Activated CD8-positive, alpha-beta memory T cell treated with anti-CD3 and anti-CD28 coated beads, Interleukin-2, amount 10 ng/mL, durations not matched to agents 7 days and 5 days (primary cell): ENCODE measurements at regions of chr15 and their contacts with region 1.

Region 1: GRCh38 chr15:59528965-59529402 is 82.6 kb upstream of the GCNT3 start:
- DNase-seq: peak; percentile 80
- ATAC-seq: peak; percentile 88
- H3K4me3 Mint-ChIP-seq: no peak overlapping the region
- H3K27ac Mint-ChIP-seq: no peak overlapping the region
- H3K4me1 Mint-ChIP-seq: peaks cover 15% of the 10 kb centered on the region
- H3K27me3 Mint-ChIP-seq: peaks cover 33% of the 10 kb centered on the region

Region 2: DNA sequence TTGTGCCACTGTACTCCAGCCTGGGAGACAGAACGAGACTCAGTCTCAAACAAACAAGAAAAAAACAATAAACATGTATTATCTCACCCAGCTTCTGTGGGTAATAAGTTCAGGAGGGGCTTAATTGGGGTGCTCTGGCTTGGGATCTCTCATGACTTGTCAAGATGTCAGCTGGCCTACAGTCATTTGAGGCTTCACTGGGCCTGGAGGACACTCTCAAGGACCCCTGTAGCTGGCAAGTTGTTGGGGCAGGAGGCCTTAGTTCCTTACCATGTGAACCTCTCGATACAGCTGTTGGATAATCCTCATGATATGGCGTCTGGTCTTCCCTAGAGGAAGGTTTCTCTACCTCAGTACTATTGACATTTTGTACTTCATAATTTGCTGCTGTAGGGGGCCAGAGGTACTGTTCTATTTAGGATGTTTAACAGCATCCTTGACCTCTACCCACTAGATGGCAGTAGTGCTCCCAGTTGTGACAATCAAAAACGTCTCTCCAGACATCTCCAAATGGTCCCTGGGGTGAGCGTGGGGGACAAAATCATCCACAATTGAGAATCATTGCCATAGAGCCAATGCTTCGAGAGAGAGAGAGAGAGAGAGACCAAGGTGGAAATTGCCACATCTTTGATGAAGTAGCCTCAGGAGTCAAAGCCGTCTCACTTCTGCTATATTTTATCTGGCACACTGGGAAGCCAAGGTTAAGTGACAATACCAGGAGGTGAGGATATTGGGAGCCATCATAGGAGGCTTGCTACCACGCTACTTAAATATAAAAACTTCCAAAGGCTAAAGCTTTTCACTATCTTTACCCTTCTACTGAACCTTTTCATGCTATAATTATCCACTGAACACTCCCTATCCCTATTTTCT is 571.6 kb before region 1 on chr15:
- CTCF ChIA-PET with region 1: interaction called, 10 read pairs
- DNase-seq: peak; percentile 73
- ATAC-seq: peak; percentile 91
- H3K4me3 Mint-ChIP-seq: no peak overlapping the region
- H3K27ac Mint-ChIP-seq: no peak overlapping the region
- H3K4me1 Mint-ChIP-seq: peaks cover 15% of the 10 kb centered on the region
- H3K27me3 Mint-ChIP-seq: no peaks in the 10 kb centered on the region

Region 3: DNA sequence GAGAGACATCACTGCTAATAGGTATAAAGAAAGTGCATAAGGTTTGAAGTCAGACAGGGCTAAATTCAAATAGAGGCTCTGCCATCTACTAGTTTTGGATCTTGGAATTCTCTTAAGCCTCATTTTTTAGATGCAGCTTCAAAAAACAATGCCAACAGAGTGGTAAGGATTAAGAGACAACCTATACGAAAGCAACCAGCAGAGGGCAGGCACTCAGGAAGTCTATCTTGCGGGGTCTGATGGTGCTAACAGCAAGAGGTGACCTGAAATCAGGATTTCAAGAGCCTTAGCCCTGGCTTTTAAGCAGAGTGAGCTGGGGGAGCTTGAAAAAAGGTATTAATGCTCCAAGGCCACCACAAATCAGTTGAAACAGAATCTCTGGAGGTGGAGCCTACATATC is 281.6 kb before region 1 on chr15:
- CTCF ChIA-PET with region 1: interaction called, 13 read pairs
- DNase-seq: peak; percentile 81
- ATAC-seq: peak; percentile 77
- H3K4me3 Mint-ChIP-seq: no peak overlapping the region
- H3K27ac Mint-ChIP-seq: peak overlapping the region; percentile 59
- H3K4me1 Mint-ChIP-seq: peaks cover 39% of the 10 kb centered on the region
- H3K27me3 Mint-ChIP-seq: peaks cover 2% of the 10 kb centered on the region

Region 4: DNA sequence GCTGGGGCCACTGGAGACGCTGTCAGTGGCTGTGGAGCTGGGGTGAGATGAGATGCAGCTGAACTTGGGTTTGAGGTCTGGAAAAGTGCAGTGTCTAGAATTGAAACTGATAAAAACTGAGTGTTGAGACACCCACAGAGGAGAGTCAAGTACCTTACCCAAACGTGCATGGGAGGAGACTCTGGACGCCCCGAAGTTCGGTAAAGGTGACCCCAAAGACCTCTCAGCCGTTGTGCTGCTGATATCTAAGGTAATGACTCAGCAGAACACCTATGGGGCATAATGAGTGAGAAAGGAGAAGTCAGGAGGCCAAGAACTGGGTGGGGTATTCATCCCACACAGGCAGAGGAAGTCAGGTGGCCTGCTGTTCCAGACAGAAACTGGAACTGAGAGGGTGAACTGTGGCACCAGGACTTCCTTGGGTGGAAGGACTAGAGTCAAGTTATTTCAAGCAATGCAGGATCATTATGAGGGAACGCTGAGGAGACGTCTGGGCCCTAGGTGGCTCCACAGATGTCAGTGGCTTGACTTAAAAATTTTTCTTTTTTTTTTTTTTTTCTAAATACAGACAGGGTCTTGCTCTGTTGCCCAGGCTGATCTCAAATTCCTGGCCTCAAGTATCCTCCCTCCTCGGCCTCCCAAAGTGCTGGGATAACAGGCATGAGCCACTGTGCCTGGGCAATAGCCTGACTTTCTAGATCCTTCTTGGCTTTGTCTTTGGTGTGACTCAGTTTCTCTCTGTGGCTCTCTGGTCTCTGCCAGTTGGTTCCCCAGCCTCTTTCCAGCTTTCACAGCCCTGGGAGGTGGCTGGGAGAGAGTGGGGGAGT is 14.9 kb after region 1 on chr15:
- CTCF ChIA-PET with region 1: interaction called, 16 read pairs
- DNase-seq: peak; percentile 47
- ATAC-seq: peak; percentile 72
- H3K4me3 Mint-ChIP-seq: peak overlapping the region; percentile 11
- H3K27ac Mint-ChIP-seq: peak overlapping the region; percentile 56
- H3K4me1 Mint-ChIP-seq: peaks cover 14% of the 10 kb centered on the region
- H3K27me3 Mint-ChIP-seq: peaks cover 2% of the 10 kb centered on the region

Region 5: GRCh38 chr15:59622289-59622688 is 93.3 kb after region 1 on chr15:
- CTCF ChIA-PET with region 1: interaction called, 19 read pairs
- DNase-seq: peak; percentile 81
- ATAC-seq: peak; percentile 93
- H3K4me3 Mint-ChIP-seq: no peak overlapping the region
- H3K27ac Mint-ChIP-seq: no peak overlapping the region
- H3K4me1 Mint-ChIP-seq: no peaks in the 10 kb centered on the region
- H3K27me3 Mint-ChIP-seq: peaks cover 29% of the 10 kb centered on the region

Region 6: GRCh38 chr15:59642351-59642750 is 113.4 kb after region 1 on chr15:
- CTCF ChIA-PET with region 1: interaction called, 11 read pairs
- DNase-seq: no peak
- ATAC-seq: no peak
- H3K4me3 Mint-ChIP-seq: no peak overlapping the region
- H3K27ac Mint-ChIP-seq: no peak overlapping the region
- H3K4me1 Mint-ChIP-seq: peaks cover 2% of the 10 kb centered on the region
- H3K27me3 Mint-ChIP-seq: no peaks in the 10 kb centered on the region

Region 7: GRCh38 chr15:59762558-59762957 is 233.6 kb after region 1 on chr15:
- CTCF ChIA-PET with region 1: no interaction called
- DNase-seq: no peak
- ATAC-seq: no peak
- H3K4me3 Mint-ChIP-seq: no peak overlapping the region
- H3K27ac Mint-ChIP-seq: no peak overlapping the region
- H3K4me1 Mint-ChIP-seq: peaks cover 2% of the 10 kb centered on the region
- H3K27me3 Mint-ChIP-seq: peaks cover 8% of the 10 kb centered on the region